Activated naive CD4-positive, alpha-beta T cell treated with anti-CD3 and anti-CD28 coated beads, Interleukin-2, amount 10 ng/mL, durations not matched to agents 7 days and 5 days (primary cell): ENCODE measurements at regions of chr4 and their contacts with region 1.

Region 1: GRCh38 chr4:48005781-48006180 is 10.7 kb downstream of the CNGA1 start:
- DNase-seq: no peak
- H3K4me3 Mint-ChIP-seq: no peak overlapping the region
- H3K27ac Mint-ChIP-seq: no peak overlapping the region
- H3K4me1 Mint-ChIP-seq: no peaks in the 10 kb centered on the region
- H3K27me3 Mint-ChIP-seq: peaks cover 4% of the 10 kb centered on the region

Region 2: DNA sequence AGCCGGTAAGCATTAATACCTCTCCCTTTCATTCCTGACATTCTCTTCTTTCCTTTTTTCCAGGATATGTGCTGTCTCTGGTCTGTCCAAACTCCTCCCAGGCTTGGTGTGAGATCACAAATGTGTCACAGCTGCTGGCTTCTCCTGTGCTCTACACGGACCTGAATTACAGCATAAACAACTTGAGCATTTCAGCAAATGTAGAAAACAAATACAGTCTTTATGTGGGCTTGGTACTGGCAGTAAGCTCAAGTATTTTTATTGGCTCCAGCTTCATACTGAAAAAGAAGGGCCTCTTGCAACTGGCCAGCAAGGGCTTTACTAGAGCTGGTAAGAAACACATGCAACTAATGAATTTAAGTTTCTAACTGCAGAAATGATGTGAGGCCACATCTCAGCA is 19.2 kb after region 1 on chr4:
- CTCF ChIA-PET with region 1: no interaction called
- DNase-seq: no peak
- H3K4me3 Mint-ChIP-seq: no peak overlapping the region
- H3K27ac Mint-ChIP-seq: no peak overlapping the region
- H3K4me1 Mint-ChIP-seq: peaks cover 8% of the 10 kb centered on the region
- H3K27me3 Mint-ChIP-seq: peaks cover 11% of the 10 kb centered on the region

Region 3: GRCh38 chr4:48065587-48066052 is 59.8 kb after region 1 on chr4:
- CTCF ChIA-PET with region 1: no interaction called
- DNase-seq: no peak
- H3K4me3 Mint-ChIP-seq: no peak overlapping the region
- H3K27ac Mint-ChIP-seq: no peak overlapping the region
- H3K4me1 Mint-ChIP-seq: peaks cover 3% of the 10 kb centered on the region
- H3K27me3 Mint-ChIP-seq: no peaks in the 10 kb centered on the region

Region 4: GRCh38 chr4:48085821-48086607 is 80.2 kb after region 1 on chr4:
- CTCF ChIA-PET with region 1: interaction called, 34 read pairs
- DNase-seq: no peak
- H3K4me3 Mint-ChIP-seq: no peak overlapping the region
- H3K27ac Mint-ChIP-seq: no peak overlapping the region
- H3K4me1 Mint-ChIP-seq: no peaks in the 10 kb centered on the region
- H3K27me3 Mint-ChIP-seq: no peaks in the 10 kb centered on the region

Region 5: GRCh38 chr4:48093949-48094550 is 88.3 kb after region 1 on chr4:
- CTCF ChIA-PET with region 1: interaction called, 11 read pairs
- DNase-seq: no peak
- H3K4me3 Mint-ChIP-seq: no peak overlapping the region
- H3K27ac Mint-ChIP-seq: no peak overlapping the region
- H3K4me1 Mint-ChIP-seq: no peaks in the 10 kb centered on the region
- H3K27me3 Mint-ChIP-seq: no peaks in the 10 kb centered on the region